MCF 10A (cell line): ENCODE measurements at regions of chr5 and their contacts with region 1.

Region 1: DNA sequence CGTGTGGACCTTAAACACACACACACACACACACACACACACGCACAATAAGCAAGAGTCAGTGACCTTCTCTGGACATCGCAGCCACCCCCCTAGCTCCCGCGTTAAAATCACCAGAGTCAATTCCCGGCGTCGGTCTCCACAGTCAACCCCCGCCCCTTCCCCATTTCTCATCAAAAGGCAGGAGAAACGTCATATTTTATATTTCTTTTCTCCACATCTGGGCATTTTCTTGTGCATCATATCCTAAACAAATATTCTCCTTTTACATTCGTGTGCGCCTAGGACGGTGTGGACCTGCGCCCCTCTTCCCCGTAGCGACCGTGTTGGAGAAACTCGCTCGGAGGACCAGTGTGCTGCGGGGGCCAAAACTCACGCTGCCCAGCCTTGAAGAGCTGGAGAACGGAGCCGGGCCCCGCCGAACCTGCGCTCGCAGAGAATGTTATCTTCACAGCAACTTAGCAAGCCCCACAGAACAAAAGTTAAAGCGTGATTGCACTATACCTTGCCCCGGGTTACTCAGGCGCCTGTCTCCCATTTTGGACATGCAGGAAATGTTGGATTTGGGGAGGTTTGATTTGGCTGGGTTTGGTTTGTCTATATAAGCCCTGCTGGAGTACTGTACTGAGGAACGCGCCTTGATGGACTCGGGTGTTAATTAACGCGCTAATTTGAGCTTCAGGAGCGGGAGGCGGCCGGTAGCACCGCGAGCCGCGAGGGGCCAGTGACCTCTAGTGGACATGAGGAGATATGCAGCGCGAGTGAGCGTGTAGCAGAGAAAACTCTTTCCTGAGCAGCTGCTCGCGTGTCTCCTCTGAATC is 192.4 kb downstream of the MEF2C start:
- DNase-seq: peak; percentile 61
- H3K4me3 Mint-ChIP-seq: peak overlapping the region; percentile 10
- H3K27ac Mint-ChIP-seq: no peak overlapping the region
- H3K4me1 Mint-ChIP-seq: peaks cover 7% of the 10 kb centered on the region
- H3K27me3 Mint-ChIP-seq: peaks cover 100% of the 10 kb centered on the region
- CTCF ChIP-seq: peak; percentile 98

Region 2: GRCh38 chr5:87421307-87421706 is 1269.3 kb before region 1 on chr5:
- CTCF ChIA-PET with region 1: interaction called, 4 read pairs
- POLR2A ChIA-PET with region 1: no interaction called
- intact Hi-C with region 1: loop called (anchors 10 kb)
- DNase-seq: peak; percentile 54
- H3K4me3 Mint-ChIP-seq: no peak overlapping the region
- H3K27ac Mint-ChIP-seq: no peak overlapping the region
- H3K4me1 Mint-ChIP-seq: peaks cover 12% of the 10 kb centered on the region
- H3K27me3 Mint-ChIP-seq: no peaks in the 10 kb centered on the region
- CTCF ChIP-seq: no peak

Region 3: DNA sequence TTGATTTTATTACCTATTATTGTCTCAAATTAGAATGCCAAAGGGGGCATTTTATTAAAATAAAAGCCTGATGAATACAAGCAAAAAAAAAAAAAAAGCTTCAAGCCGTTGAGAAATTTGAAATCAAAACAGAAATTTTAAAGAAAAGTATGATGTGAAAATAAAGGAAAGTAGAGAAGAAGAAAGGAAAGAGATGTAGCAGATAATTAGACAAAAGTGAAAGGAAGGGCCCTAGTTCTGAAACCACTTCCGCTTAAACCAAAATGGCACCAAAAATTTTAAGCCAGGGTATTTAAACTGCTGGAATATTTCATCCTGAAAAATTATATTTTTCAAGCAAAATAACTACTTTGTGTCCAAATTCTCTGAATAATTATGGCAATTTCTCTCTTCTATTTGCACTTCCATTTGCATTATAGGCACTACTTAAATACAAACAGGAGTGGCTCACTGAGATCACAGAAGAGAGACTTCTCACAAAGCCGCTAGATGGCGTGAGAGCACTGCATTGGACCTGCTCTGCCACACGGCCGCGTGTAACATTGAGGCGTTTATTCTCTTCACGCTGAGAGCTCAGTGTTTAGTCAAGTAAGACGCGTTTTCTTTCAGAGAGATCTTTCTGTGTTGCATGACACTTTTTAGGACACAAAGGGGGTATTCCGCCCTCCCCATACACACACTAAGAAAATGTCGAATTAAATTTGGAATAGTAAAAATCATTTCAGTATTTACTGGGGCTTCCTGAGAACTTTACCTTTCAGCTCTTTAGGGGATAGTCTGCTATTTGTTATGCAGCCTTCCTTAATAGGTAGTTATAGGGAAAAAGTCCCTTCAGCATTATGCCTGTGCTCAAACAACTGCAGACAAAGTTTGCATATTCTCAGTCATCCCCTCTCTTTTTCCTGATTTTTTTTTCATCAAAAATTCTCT is 909.5 kb before region 1 on chr5:
- CTCF ChIA-PET with region 1: interaction called, 107 read pairs
- POLR2A ChIA-PET with region 1: no interaction called
- intact Hi-C with region 1: loop called (anchors 1 kb)
- DNase-seq: peak; percentile 86
- H3K4me3 Mint-ChIP-seq: no peak overlapping the region
- H3K27ac Mint-ChIP-seq: no peak overlapping the region
- H3K4me1 Mint-ChIP-seq: no peaks in the 10 kb centered on the region
- H3K27me3 Mint-ChIP-seq: peaks cover 73% of the 10 kb centered on the region
- CTCF ChIP-seq: peak; percentile 90

Region 4: DNA sequence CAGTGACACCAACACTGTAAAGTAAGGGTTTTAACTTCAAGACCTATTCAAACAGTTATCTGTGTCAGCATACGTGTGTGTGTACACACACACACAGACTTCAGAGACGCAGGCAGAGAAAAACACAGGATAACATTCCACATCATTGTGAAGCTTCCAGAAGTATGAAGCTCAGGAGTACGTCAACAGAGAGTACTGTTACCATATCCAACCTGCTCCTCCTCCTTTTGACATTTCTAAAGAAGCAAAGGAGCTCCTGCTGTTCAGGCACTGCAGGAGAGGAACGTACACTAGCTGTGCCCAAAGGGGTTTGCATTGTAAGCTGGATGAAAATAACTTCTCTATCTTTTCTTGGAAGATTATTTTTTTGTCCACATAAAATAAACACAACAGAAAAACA is 11.7 kb after region 1 on chr5:
- CTCF ChIA-PET with region 1: interaction called, 14 read pairs
- POLR2A ChIA-PET with region 1: no interaction called
- intact Hi-C with region 1: no loop called
- DNase-seq: no peak
- H3K4me3 Mint-ChIP-seq: no peak overlapping the region
- H3K27ac Mint-ChIP-seq: no peak overlapping the region
- H3K4me1 Mint-ChIP-seq: no peaks in the 10 kb centered on the region
- H3K27me3 Mint-ChIP-seq: peaks cover 55% of the 10 kb centered on the region
- CTCF ChIP-seq: no peak

Region 5: GRCh38 chr5:88713818-88714217 is 23.2 kb after region 1 on chr5:
- CTCF ChIA-PET with region 1: interaction called, 12 read pairs
- POLR2A ChIA-PET with region 1: no interaction called
- intact Hi-C with region 1: no loop called
- DNase-seq: no peak
- H3K4me3 Mint-ChIP-seq: no peak overlapping the region
- H3K27ac Mint-ChIP-seq: no peak overlapping the region
- H3K4me1 Mint-ChIP-seq: no peaks in the 10 kb centered on the region
- H3K27me3 Mint-ChIP-seq: peaks cover 58% of the 10 kb centered on the region
- CTCF ChIP-seq: no peak

Region 6: GRCh38 chr5:88772047-88772446 is 81.4 kb after region 1 on chr5:
- CTCF ChIA-PET with region 1: no interaction called
- POLR2A ChIA-PET with region 1: no interaction called
- intact Hi-C with region 1: no loop called
- DNase-seq: no peak
- H3K4me3 Mint-ChIP-seq: no peak overlapping the region
- H3K27ac Mint-ChIP-seq: no peak overlapping the region
- H3K4me1 Mint-ChIP-seq: no peaks in the 10 kb centered on the region
- H3K27me3 Mint-ChIP-seq: peaks cover 67% of the 10 kb centered on the region
- CTCF ChIP-seq: no peak

Region 7: DNA sequence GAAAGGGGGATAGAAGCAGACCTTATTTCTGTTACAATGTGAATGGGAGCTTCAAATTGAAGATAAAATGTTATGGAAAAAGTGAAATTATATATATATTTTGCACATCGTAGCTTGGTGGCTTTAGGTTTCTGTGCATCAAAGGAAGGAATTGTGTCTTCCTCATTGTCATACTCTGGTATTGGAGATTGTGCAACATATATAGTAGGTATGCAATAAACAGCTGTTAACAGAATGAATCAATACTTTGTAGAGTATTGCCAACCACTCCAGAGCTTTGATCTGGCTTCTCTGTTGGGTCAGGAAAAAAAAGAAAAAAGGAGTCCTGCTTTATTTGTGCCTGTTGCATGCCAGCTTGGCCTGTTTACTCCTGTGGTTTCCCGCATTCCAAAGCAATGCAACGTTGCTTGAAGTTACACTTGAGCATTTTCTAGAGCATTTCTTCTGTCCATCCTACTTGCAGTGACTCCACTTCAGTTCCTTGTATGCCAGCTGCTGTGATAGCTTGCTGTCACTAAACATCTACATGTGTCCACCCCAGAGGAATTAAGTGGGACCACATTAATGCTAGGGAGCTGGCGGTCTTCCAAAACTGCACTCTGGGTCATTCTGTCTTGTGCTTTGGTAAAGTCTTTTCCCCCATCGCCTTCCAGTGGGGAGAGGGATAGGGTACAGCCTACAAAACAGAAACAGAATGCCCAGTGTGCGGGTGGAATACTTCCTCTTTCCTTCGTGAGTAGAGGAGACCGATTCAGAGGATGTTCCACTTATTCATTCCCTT is 254.3 kb after region 1 on chr5:
- CTCF ChIA-PET with region 1: no interaction called
- POLR2A ChIA-PET with region 1: no interaction called
- intact Hi-C with region 1: no loop called
- DNase-seq: no peak
- H3K4me3 Mint-ChIP-seq: no peak overlapping the region
- H3K27ac Mint-ChIP-seq: no peak overlapping the region
- H3K4me1 Mint-ChIP-seq: no peaks in the 10 kb centered on the region
- H3K27me3 Mint-ChIP-seq: peaks cover 74% of the 10 kb centered on the region
- CTCF ChIP-seq: no peak

Region 8: DNA sequence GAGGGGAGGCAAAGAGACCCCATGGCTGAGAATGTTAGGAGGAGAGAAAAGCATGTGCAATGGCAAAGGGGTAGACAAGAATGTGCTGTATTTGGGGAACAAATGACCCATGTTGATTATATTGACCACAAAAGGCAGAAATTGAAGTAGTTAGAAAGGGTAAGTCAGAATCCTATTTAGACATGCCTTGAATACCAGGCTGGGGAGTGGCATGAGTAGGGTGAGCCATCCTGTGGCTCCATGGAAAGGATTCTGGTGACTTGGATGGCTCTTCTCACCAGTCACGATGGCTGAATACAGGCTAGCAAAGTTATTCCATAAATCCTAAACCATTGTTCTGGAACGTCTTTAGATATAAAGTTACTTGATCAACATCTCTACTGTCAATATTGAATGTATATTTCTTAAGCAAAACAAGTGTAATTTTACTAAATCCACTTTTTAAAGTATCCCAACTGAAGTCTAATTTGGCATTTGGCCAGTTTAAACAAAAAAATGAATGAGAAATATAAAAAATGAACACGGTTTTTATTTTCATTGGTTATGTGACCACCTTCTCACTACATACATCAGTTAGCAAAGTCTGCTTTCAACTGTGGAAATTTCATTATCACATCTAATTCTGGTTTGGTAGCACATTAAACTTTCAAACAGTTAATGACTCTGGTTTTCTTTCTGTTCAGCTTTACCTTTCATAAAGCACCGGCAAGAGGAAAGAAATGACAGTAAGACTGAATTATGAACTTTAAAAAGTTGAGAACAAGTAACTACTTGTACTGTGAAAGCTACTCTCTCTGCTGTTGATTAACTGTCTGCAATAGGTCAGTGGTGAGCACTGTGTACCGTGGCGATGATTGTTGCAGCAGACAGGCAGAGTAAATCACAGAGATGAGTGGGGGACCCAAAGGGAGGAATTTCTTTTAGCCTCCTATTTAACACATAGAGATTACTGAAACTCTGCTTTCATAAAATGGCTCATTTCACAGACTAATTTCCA is 266.1 kb after region 1 on chr5:
- CTCF ChIA-PET with region 1: no interaction called
- POLR2A ChIA-PET with region 1: no interaction called
- intact Hi-C with region 1: no loop called
- DNase-seq: no peak
- H3K4me3 Mint-ChIP-seq: no peak overlapping the region
- H3K27ac Mint-ChIP-seq: no peak overlapping the region
- H3K4me1 Mint-ChIP-seq: no peaks in the 10 kb centered on the region
- H3K27me3 Mint-ChIP-seq: peaks cover 60% of the 10 kb centered on the region
- CTCF ChIP-seq: no peak